GM12878 (cell line): ENCODE measurements at regions of chr17 and their contacts with region 1.

Region 1: DNA sequence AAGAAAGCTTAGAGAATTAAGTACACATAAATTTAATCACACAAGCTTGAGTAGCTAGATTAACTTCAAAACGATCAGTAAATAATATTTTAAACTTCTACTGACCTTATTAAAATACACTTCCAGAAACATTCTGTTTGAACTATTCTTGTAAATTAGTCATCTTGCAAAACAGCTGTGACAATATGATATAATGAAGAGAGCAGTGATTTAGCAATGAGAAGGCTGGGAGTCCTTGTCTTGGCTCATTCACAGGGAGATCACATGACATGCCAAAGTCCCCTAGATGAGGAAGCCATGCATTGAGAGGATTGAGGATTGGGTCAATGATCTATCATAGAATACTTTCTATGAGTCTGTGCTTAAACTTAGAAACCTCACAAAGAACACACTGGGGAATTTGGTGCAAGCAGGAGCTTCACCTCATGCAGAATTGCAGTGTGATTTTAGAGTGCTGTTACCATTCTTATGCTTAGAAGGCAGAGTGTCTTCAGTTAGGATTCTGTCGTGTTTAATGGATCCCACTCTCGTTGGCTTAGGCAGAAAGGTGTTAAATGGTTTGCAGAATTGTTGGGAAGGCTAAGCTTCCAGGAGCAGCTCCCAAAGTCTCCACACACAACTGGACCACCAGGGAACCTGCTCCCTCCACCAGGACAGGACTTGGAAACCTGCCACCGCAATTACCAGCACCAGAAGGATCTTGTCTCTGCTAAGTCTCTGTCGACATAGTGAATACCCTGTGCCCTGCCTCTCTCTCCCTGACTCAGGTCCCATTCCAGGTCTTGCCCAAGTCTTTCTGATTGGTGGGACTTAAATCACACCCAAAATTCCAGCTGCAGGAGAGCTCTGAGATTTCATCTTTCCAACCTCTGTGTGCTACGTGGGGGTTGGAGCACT is 87.1 kb downstream of the USP22 start:
- DNase-seq: no peak
- ATAC-seq: no peak
- H3K4me3 ChIP-seq: no peak overlapping the region
- H3K27ac ChIP-seq: no peak overlapping the region
- H3K4me1 ChIP-seq: no peaks in the 10 kb centered on the region
- H3K27me3 ChIP-seq: peaks cover 0 to 5% of the 10 kb centered on the region in 2 experiments; a peak in 3 of 4 replicates
- CTCF ChIP-seq: no peak
- EP300 ChIP-seq: no peak
- POLR2A ChIP-seq: no peak
- RAD21 ChIP-seq: no peak

Region 2: DNA sequence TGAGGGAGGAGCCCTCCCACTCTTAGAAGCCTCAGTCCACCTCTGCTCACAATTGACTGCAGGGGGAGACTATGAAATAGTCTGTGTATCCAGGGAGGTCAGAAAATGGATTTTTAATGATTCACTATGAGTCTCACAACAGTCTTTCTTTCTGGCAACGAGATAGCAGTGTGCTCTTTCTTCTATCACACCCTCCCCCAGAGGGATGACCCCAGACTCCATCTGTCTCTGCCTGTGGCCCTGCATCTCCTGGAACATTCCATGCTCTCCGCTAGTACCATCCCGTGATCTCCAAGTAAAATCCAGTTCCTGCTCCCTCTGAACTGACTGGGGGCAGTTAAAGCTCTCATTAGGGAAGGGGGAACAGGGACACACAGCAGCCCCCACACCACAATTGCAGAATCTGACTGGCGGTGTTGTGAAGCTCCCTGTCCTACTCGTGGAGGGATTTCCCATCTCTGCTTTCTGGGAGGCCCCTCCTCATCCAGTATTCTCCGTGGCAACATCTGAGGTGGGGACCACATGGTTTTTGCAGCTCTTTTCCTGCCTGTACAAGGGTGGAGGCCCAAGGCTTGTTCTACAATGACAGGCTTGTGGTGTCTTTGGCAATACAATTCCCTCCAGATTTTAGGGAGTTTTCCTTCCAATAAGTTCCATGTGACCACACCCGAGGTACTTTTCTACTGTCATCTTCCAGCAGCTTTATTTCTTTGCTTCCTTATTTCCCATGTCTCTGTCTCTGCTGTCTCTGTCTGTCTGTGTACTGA is 278.1 kb after region 1 on chr17:
- CTCF ChIA-PET with region 1: no interaction called
- POLR2A ChIA-PET with region 1: no interaction called
- RAD21 ChIA-PET with region 1: no interaction called
- SMC1A ChIA-PET with region 1: no interaction called
- in situ Hi-C with region 1: no loop called
- intact Hi-C with region 1: no loop called
- DNase-seq: no peak
- ATAC-seq: no peak
- H3K4me3 ChIP-seq: no peak overlapping the region
- H3K27ac ChIP-seq: no peak overlapping the region
- H3K4me1 ChIP-seq: no peaks in the 10 kb centered on the region
- H3K27me3 ChIP-seq: no peaks in the 10 kb centered on the region
- CTCF ChIP-seq: no peak
- EP300 ChIP-seq: no peak
- POLR2A ChIP-seq: no peak
- RAD21 ChIP-seq: no peak

Region 3: DNA sequence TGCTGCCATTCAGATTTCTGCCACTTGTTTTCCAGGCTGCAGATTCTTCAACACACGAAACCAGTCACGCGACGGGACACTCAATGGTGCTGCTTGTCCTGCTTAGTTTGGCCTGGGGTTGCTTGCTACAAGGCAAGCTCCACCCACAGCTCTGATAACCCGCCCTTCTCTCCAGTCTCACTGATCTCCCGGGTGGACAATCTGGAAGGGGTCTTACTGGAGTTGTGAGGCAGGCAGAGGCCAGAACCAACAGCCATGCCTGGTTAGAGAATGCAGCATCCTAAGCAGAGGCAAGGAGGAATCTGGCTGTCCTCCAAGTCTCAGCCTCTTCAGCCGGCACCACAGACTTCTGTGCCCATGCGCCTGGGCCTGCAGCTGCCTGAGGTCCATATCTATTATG is 539.6 kb after region 1 on chr17:
- CTCF ChIA-PET with region 1: no interaction called
- POLR2A ChIA-PET with region 1: no interaction called
- RAD21 ChIA-PET with region 1: no interaction called
- SMC1A ChIA-PET with region 1: no interaction called
- in situ Hi-C with region 1: loop called (anchors 25 kb)
- intact Hi-C with region 1: no loop called
- DNase-seq: no peak
- ATAC-seq: no peak
- H3K4me3 ChIP-seq: no peak overlapping the region
- H3K27ac ChIP-seq: no peak overlapping the region
- H3K4me1 ChIP-seq: no peaks in the 10 kb centered on the region
- H3K27me3 ChIP-seq: no peaks in the 10 kb centered on the region; a peak in 1 of 4 replicates
- CTCF ChIP-seq: no peak
- EP300 ChIP-seq: no peak
- POLR2A ChIP-seq: no peak
- RAD21 ChIP-seq: no peak